WTC11 (cell line): ENCODE measurements at regions of chr1 and their contacts with region 1.

Region 1: DNA sequence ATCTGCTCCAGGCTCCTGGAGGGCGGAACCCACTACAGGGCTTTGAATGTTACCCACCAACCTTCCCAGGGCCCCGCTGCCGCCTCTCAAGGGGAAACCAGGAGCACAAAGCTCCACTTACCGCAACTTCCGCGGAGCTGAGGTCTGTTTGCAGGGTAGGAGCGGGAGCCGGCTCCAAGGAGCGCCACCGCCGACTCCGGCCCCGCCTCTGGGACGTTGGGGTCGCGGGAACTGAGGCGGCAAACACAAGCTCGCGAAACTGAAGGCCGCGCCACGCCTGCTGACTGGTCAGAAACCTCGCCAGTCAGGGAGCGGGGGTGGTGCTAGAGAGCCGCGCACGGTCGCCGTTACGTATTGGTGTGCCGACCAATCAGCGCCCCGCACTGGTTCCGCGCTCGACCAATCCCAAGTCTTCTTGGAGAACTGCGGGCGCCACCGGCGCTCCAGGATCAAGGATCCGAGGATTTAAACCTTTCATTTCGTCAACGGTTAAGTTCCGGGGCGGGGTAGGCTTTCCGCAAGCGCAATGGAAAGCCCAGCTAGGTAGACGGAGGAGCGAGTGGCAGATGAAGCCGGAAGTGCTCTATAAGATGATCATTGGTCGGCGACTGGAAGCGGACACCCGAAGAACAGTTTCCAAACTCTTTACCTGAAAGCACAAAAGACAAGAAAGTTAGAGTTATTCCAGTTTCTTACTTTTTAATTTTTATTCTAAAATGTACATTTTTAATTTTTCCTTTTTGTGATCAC is at the start of gene STIL:
- DNase-seq: peak; percentile 99
- ATAC-seq: peak; percentile 97
- H3K4me3 Mint-ChIP-seq: peak within 1 kb of the TSS; percentile 99
- H3K27ac Mint-ChIP-seq: peak within 1 kb of the TSS; percentile 99
- H3K4me1 Mint-ChIP-seq: peaks cover 18% of the 10 kb centered on the region
- H3K27me3 Mint-ChIP-seq: peaks cover 3% of the 10 kb centered on the region; the same call in 1 of the 2 replicates
- CTCF ChIP-seq: no peak
- total RNA-seq, gene STIL: 24.0 to 29.7 TPM (median 24.1 TPM) in 3 replicates

Region 2: DNA sequence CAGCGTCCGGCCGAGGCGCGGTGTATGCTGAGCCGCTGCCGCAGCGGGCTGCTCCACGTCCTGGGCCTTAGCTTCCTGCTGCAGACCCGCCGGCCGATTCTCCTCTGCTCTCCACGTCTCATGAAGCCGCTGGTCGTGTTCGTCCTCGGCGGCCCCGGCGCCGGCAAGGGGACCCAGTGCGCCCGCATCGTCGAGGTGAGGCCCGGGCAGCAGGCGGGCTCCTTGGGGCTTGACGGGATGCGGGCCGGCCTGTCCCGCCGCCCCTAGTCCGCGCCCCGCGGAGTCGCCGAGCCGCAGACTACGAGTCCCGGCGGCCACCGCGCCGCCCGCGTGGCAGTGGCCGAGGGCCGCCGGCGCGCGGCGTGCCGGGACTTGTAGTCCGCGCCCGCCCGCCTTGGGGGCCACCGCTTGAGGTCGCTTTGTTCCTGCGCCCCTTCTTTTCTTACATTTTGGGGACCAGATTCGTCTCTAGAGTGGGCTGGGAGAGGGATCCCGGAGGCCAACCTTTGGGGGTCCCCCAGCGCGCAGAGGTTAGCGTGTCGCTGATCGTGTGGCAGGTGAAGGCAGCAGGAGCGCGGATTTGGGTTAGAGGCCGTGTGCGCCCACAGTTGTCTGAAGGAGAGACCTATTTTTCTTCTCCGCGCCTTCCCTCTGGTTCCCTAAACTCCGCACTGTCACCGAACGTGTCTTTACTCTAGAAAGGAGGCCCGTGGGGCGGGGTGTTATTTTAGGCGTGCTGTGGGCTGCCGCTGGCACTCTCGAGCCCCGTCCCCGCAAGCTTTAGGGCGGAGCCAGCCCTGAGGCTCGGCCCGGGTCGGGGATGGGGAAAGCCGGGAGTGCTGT is 20.1 kb after region 1 on chr1:
- CTCF ChIA-PET with region 1: interaction called, 14 read pairs
- POLR2A ChIA-PET with region 1: interaction called, 21 read pairs
- DNase-seq: peak; percentile 72
- ATAC-seq: peak; percentile 87
- H3K4me3 Mint-ChIP-seq: peak overlapping the region; percentile 97
- H3K27ac Mint-ChIP-seq: peak overlapping the region; percentile 90
- H3K4me1 Mint-ChIP-seq: peaks cover 11% of the 10 kb centered on the region
- H3K27me3 Mint-ChIP-seq: no peaks in the 10 kb centered on the region
- CTCF ChIP-seq: no peak